ENCODE measurements at regions of chr5 and their contacts with region 1.

Region 1: DNA sequence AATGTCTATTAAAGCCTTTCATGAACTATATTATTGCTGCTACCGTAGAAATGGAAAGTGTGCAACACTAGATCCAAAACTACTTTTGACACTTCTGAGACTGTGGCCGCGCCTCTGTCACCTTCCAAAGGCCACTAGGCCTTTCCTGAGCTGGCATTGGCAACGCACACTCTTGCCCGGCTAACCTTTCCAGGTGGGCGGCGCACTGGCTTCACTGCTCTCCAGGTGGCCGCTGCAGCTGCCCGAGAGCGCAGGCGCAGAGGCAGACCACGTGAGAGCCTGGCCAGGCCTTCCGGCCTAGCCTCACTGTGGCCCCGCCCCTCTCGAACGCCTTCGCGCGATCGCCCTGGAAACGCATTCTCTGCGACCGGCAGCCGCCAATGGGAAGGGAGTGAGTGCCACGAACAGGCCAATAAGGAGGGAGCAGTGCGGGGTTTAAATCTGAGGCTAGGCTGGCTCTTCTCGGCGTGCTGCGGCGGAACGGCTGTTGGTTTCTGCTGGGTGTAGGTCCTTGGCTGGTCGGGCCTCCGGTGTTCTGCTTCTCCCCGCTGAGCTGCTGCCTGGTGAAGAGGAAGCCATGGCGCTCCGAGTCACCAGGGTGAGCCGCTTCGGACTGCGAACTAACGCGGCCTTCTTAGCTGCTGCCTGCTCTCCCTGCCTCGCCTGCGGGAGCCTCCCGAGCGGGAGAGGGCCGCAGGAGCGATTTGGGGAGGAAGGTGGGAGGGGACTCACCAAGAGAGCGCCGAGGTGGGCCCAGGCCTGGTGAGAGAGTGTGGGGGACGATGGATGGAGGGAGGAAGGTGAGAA is at the start of gene CCNB1:
- DNase-seq: peak; percentile 93 to 96 (median 95)
- H3K4me3 ChIP-seq: peak within 1 kb of the TSS; percentile 69 to 96 (median 80)
- H3K4me3 Mint-ChIP-seq: peak within 1 kb of the TSS; percentile 93 to 95
- H3K27ac ChIP-seq: peak within 1 kb of the TSS; percentile 26 to 66
- H3K27ac Mint-ChIP-seq: peak within 1 kb of the TSS; percentile 77 to 90 (median 81)
- H3K4me1 ChIP-seq: peaks cover 21 to 30% of the 10 kb centered on the region in 2 donors
- H3K4me1 Mint-ChIP-seq: peaks cover 30% of the 10 kb centered on the region
- H3K27me3 ChIP-seq: no peaks in the 10 kb centered on the region
- H3K27me3 Mint-ChIP-seq: peaks cover 0 to 4% (median 2%) of the 10 kb centered on the region in 3 donors
- CTCF ChIP-seq: no peak
- polyA plus RNA-seq, gene CCNB1: 0.64 to 2.6 (median 1.6) TPM

Region 2: GRCh38 chr5:69099302-69099701 is 67.6 kb before region 1 on chr5:
- intact Hi-C with region 1: loop called in 1 of 2 experiments (anchors 5 kb)
- DNase-seq: no peak
- H3K4me3 ChIP-seq: no peak overlapping the region
- H3K4me3 Mint-ChIP-seq: no peak overlapping the region
- H3K27ac ChIP-seq: no peak overlapping the region
- H3K27ac Mint-ChIP-seq: peak overlapping the region in 1 of 7 donors; percentile 47
- H3K4me1 ChIP-seq: peaks cover 9 to 11% of the 10 kb centered on the region in 2 donors
- H3K4me1 Mint-ChIP-seq: peaks cover 9% of the 10 kb centered on the region
- H3K27me3 ChIP-seq: no peaks in the 10 kb centered on the region
- H3K27me3 Mint-ChIP-seq: no peaks in the 10 kb centered on the region
- CTCF ChIP-seq: no peak

Region 3: DNA sequence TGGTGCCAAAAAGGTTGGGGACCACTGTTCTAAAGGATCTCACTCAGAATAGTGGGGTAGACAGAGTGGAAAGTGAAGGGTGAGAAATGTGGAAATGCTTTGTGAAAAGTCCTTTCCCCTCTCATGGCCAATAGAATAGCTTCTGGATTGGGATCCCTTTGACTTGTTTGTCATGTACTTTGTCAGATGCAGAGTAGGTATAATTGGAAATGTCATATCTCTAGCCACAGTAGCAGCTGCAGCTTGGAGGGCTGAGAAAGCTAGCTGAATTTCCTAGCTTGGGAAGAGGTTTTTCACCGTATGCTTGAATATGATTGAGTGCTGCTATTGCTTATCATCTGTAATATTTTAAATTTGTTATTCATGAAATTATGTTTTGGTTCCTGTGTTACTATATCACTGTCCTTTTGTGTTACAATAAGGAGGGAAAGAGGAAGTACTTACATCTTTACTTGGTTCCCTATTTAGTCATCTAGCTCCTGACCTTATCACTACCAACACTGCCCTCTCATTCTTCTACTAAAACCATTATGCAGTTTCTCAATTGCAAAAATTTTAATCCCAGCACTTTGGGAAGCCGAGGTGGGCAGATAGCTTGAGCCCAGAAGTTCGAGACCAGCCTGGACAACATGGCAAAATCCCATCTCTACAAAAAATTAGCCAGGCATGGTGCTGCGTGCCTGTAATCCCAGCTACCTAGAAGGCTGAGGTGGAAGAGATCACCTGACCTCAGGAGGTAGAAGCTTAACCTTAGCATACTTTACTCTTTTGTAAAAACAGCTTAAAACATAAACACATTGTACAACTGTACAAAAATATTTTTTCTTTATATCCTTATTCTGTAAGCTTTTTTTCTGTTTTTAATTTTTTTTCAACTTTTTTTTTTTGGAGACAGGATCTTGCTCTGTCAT is 60.6 kb before region 1 on chr5:
- intact Hi-C with region 1: loop called in 1 of 2 experiments (anchors 5 kb)
- DNase-seq: peak; percentile 41 to 71 (median 70)
- H3K4me3 ChIP-seq: no peak overlapping the region
- H3K4me3 Mint-ChIP-seq: no peak overlapping the region
- H3K27ac ChIP-seq: peak overlapping the region; percentile 4 to 80
- H3K27ac Mint-ChIP-seq: peak overlapping the region; percentile 72 to 91 (median 86)
- H3K4me1 ChIP-seq: peaks cover 11 to 14% of the 10 kb centered on the region in 2 donors
- H3K4me1 Mint-ChIP-seq: peaks cover 11% of the 10 kb centered on the region
- H3K27me3 ChIP-seq: no peaks in the 10 kb centered on the region
- H3K27me3 Mint-ChIP-seq: no peaks in the 10 kb centered on the region
- CTCF ChIP-seq: no peak

Region 4: GRCh38 chr5:69189162-69190086 is 22.5 kb after region 1 on chr5 and contains the start of gene CENPH:
- intact Hi-C with region 1: loop called in 1 of 2 experiments (anchors 2 kb)
- DNase-seq: peak; percentile 78 to 81 (median 79)
- H3K4me3 ChIP-seq: peak within 1 kb of the TSS; percentile 84 to 99 (median 88)
- H3K4me3 Mint-ChIP-seq: peak within 1 kb of the TSS; percentile 93 to 97
- H3K27ac ChIP-seq: peak within 1 kb of the TSS; percentile 57 to 89
- H3K27ac Mint-ChIP-seq: peak within 1 kb of the TSS; percentile 88 to 97 (median 95)
- H3K4me1 ChIP-seq: peaks cover 12 to 17% of the 10 kb centered on the region in 2 donors
- H3K4me1 Mint-ChIP-seq: peaks cover 14% of the 10 kb centered on the region
- H3K27me3 ChIP-seq: no peaks in the 10 kb centered on the region
- H3K27me3 Mint-ChIP-seq: peaks cover 0 to 2% (median 0%) of the 10 kb centered on the region in 3 donors
- CTCF ChIP-seq: no peak
- polyA plus RNA-seq, gene CENPH: 0.57 to 0.73 (median 0.61) TPM

Region 5: GRCh38 chr5:69217548-69218526 is 50.9 kb after region 1 on chr5:
- intact Hi-C with region 1: loop called in 1 of 2 experiments (anchors 5 kb)
- DNase-seq: peak; percentile 92 to 96 (median 93)
- H3K4me3 ChIP-seq: peak overlapping the region; percentile 86 to 98 (median 96)
- H3K4me3 Mint-ChIP-seq: peak overlapping the region; percentile 98 to 100
- H3K27ac ChIP-seq: peak overlapping the region; percentile 87
- H3K27ac Mint-ChIP-seq: peak overlapping the region; percentile 98 to 99 (median 98)
- H3K4me1 ChIP-seq: peaks cover 4 to 19% of the 10 kb centered on the region in 2 donors
- H3K4me1 Mint-ChIP-seq: peaks cover 11% of the 10 kb centered on the region
- H3K27me3 ChIP-seq: no peaks in the 10 kb centered on the region
- H3K27me3 Mint-ChIP-seq: peaks cover 0 to 3% (median 0%) of the 10 kb centered on the region in 3 donors
- CTCF ChIP-seq: peak; percentile 20

Region 6: GRCh38 chr5:69234457-69235268 is 67.8 kb after region 1 on chr5 and contains the start of gene CDK7:
- intact Hi-C with region 1: loop called in 1 of 2 experiments (anchors 1 kb)
- DNase-seq: peak; percentile 87 to 93 (median 90)
- H3K4me3 ChIP-seq: peak within 1 kb of the TSS; percentile 63 to 96 (median 87)
- H3K4me3 Mint-ChIP-seq: peak within 1 kb of the TSS; percentile 90 to 99
- H3K27ac ChIP-seq: peak within 1 kb of the TSS; percentile 58 to 84
- H3K27ac Mint-ChIP-seq: peak within 1 kb of the TSS; percentile 82 to 97 (median 91)
- H3K4me1 ChIP-seq: peaks cover 11 to 13% of the 10 kb centered on the region in 2 donors
- H3K4me1 Mint-ChIP-seq: peaks cover 24% of the 10 kb centered on the region
- H3K27me3 ChIP-seq: no peaks in the 10 kb centered on the region
- H3K27me3 Mint-ChIP-seq: no peaks in the 10 kb centered on the region
- CTCF ChIP-seq: no peak
- polyA plus RNA-seq, gene CDK7: 12.4 to 20.4 (median 14.4) TPM